Pancreas (tissue), 10 donors: ENCODE measurements at regions of chr20 and their contacts with region 1.

Region 1: DNA sequence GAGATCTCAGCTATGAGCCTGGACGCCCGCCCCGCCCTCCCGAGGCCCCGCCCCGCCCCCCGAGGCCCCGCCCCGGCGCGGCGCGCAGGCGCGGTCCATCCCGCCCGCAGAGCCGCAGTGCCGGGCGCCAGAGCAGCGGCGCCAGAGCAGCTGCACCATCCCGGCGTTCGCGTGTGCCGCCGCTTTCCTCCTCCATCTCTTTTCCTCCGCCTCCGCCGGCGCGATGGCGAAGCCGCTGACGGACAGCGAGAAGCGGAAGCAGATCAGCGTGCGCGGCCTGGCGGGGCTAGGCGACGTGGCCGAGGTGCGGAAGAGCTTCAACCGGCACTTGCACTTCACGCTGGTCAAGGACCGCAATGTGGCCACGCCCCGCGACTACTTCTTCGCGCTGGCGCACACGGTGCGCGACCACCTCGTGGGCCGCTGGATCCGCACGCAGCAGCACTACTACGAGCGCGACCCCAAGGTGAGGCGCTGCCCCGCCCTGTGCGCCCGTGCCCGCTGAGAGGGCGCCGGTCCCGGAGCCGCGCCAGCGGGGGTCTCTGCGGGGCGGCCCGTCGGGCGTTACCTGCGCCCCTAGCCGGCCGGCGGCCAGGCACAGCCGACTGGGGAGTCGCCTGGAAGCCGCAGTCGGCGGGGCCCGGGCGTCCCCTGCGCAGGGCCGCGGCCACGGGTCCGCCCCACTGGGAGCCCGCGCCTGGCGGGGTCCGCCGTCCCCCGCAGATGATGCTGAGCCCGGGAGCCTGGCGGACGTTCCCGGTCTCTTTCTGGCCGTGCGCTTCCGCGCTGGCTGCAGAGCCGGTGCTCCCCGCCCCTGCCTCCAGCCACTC is at the start of gene PYGB:
- DNase-seq: peak; percentile 70 to 92 (median 82)
- ATAC-seq: peak; percentile 87 to 95 (median 94)
- H3K4me3 ChIP-seq: peak within 1 kb of the TSS; percentile 60 to 96 (median 70)
- H3K27ac ChIP-seq: peak within 1 kb of the TSS; percentile 64 to 97 (median 84)
- H3K4me1 ChIP-seq: peaks cover 0 to 16% (median 6%) of the 10 kb centered on the region in 3 donors
- H3K27me3 ChIP-seq: no peaks in the 10 kb centered on the region
- CTCF ChIP-seq: no peak
- total RNA-seq, gene PYGB: 17.4 to 25.0 (median 23.7) TPM

Region 2: GRCh38 chr20:25195014-25195961 is 52.9 kb before region 1 on chr20 and contains the start of gene ENTPD6:
- intact Hi-C with region 1: loop called in 1 of 3 experiments (anchors 10 kb)
- DNase-seq: peak; percentile 88 to 99 (median 94)
- ATAC-seq: peak; percentile 88 to 97 (median 96)
- H3K4me3 ChIP-seq: peak within 1 kb of the TSS; percentile 75 to 99 (median 94)
- H3K27ac ChIP-seq: peak within 1 kb of the TSS; percentile 72 to 91 (median 88)
- H3K4me1 ChIP-seq: peaks cover 6 to 18% (median 8%) of the 10 kb centered on the region in 3 donors
- H3K27me3 ChIP-seq: no peaks in the 10 kb centered on the region
- CTCF ChIP-seq: no peak
- total RNA-seq, gene ENTPD6: 31.4 to 63.0 (median 41.6) TPM

Region 3: GRCh38 chr20:25294459-25295385 is 46.6 kb after region 1 on chr20:
- intact Hi-C with region 1: loop called in 1 of 3 experiments (anchors 5 kb)
- DNase-seq: peak in 2 of 6 donors; percentile 45 to 67
- ATAC-seq: peak in 3 of 4 donors; percentile 23 to 63 (median 50)
- H3K4me3 ChIP-seq: no peak overlapping the region
- H3K27ac ChIP-seq: peak overlapping the region; percentile 28 to 60 (median 53)
- H3K4me1 ChIP-seq: peaks cover 0 to 24% (median 8%) of the 10 kb centered on the region in 3 donors
- H3K27me3 ChIP-seq: no peaks in the 10 kb centered on the region
- CTCF ChIP-seq: peak in 3 of 4 donors; percentile 35

Region 4: GRCh38 chr20:25525295-25526266 is 277.4 kb after region 1 on chr20:
- intact Hi-C with region 1: no loop called
- DNase-seq: no peak
- ATAC-seq: peak in 2 of 4 donors; percentile 43 to 62
- H3K4me3 ChIP-seq: no peak overlapping the region
- H3K27ac ChIP-seq: no peak overlapping the region
- H3K4me1 ChIP-seq: no peaks in the 10 kb centered on the region
- H3K27me3 ChIP-seq: no peaks in the 10 kb centered on the region
- CTCF ChIP-seq: no peak